Activated B cell treated with CpG ODN at 0.5 μM for 24 hours (primary cell): ENCODE measurements at regions of chr7 and their contacts with region 1.

Region 1: GRCh38 chr7:100726996-100727761 is 6.2 kb upstream of the ZAN start:
- DNase-seq: no peak
- ATAC-seq: no peak
- H3K4me3 Mint-ChIP-seq: no peak overlapping the region
- H3K27ac Mint-ChIP-seq: no peak overlapping the region
- H3K4me1 Mint-ChIP-seq: peaks cover 5% of the 10 kb centered on the region
- H3K27me3 Mint-ChIP-seq: peaks cover 19% of the 10 kb centered on the region
- CTCF ChIP-seq: no peak

Region 2: GRCh38 chr7:100469227-100470044 is 257.7 kb before region 1 on chr7:
- CTCF ChIA-PET with region 1: interaction called, 3 read pairs
- POLR2A ChIA-PET with region 1: no interaction called
- intact Hi-C with region 1: loop called (anchors 1 kb)
- DNase-seq: peak; percentile 81
- ATAC-seq: peak; percentile 91
- H3K4me3 Mint-ChIP-seq: no peak overlapping the region
- H3K27ac Mint-ChIP-seq: peak overlapping the region; percentile 46
- H3K4me1 Mint-ChIP-seq: peaks cover 24% of the 10 kb centered on the region
- H3K27me3 Mint-ChIP-seq: no peaks in the 10 kb centered on the region
- CTCF ChIP-seq: no peak